HCT116 (cell line): ENCODE measurements at regions of chr21 and their contacts with region 1.

Region 1: DNA sequence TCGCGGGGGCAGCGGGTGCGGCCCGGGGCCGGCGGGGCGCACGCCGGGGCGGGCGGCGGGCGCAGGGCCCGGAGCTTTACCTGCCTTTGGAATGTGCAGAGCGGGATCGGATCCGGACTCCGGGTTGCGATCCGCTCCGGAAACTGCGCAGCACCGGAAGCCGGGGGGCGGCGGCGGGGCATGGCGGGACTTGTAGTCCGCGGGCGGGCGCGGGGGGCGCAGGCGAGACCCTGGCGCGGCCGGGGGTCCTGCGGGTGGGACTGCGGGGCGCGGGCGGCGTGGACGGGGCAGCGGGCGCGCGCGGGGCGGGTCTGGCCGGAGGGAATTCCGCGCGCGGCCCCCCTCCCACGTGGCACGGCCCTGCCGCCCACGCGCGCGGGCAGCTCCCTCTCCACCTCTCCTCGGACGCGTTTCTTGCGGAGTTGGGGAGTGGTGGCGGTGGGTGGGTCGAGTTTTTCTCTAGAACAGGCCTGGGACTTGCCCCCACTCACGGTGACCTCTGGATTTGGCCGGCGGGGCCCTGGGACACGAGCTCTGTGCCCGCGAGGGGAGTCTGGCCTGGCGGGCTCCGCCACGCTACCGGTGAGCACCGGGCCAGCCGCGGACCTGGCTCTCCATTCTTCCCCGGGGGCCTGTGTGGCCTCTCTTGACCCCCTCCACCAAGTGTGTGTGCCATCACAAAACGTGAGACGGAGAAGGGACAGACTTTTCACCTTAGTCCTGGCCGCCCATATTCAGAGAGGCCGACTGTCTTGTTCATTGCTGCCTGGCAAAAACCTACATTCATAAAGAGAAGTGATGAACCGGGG is at the start of gene PRDM15:
- DNase-seq: peak; percentile 60
- ATAC-seq: peak; percentile 80
- H3K4me3 ChIP-seq: peak within 1 kb of the TSS; percentile 77 to 80
- H3K27ac ChIP-seq: peak within 1 kb of the TSS; percentile 94
- H3K4me1 ChIP-seq: peaks cover 8 to 29% of the 10 kb centered on the region in 2 experiments
- H3K27me3 ChIP-seq: no peaks in the 10 kb centered on the region
- CTCF ChIP-seq: no peak
- POLR2A ChIP-seq: no peak
- RAD21 ChIP-seq: no peak
- total RNA-seq, gene PRDM15: 9.8 TPM

Region 2: DNA sequence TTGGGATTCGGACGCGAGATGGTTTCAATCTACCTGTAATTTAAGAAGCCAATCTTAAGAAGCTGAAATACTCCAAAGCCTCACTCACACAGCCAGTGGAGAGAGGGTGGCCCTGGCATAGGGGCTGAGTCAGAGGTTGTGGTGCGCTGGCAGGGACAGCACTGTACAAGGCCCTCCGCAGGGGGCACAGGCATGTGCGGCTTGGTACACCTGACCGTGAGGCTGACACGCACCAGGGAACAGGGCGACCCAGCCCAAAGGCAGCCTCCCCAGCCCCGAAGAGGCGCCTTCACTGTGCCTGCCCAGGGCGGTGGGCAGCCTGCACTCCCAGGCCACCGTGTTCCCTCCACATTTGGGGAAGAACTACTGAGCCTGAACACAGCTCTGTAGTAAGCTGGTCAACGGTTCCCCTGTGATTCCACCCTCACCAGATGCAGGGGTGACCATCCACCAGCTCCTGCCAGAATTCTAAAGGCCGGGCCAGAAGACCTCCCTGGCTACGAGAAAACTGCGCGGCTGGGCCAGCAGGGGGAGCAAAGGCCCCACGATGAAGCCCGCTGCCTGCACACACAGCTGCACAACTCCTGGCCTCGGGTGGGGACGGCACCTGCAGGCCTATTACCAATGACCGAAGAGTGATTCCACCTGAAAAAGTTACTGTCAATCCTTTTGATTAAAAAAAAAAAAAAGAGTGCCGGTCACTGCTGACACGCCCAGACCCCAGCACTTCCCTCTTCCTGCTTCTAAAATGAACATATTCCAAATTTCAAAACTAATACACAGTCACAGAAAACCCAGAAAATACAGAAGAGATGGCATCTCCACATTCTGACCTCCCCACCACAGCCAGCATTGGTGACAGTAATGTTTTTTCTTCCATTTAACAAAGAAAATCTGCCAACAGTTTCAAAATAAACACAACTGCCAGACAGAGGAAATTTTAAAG is 62.9 kb before region 1 on chr21:
- CTCF ChIA-PET with region 1: no interaction called
- POLR2A ChIA-PET with region 1: no interaction called
- RAD21 ChIA-PET with region 1: no interaction called
- intact Hi-C with region 1: loop called (anchors 2 kb)
- DNase-seq: no peak
- ATAC-seq: peak; percentile 87
- H3K4me3 ChIP-seq: no peak overlapping the region
- H3K27ac ChIP-seq: no peak overlapping the region
- H3K4me1 ChIP-seq: no peaks in the 10 kb centered on the region
- H3K27me3 ChIP-seq: no peaks in the 10 kb centered on the region
- CTCF ChIP-seq: peak; percentile 52 to 77 (median 76); a peak in 5 of 6 replicates
- POLR2A ChIP-seq: no peak
- RAD21 ChIP-seq: peak; percentile 74

Region 3: GRCh38 chr21:41953831-41954653 is 74.6 kb after region 1 on chr21 and contains the start of gene C2CD2:
- CTCF ChIA-PET with region 1: no interaction called
- POLR2A ChIA-PET with region 1: interaction called, 4 read pairs
- RAD21 ChIA-PET with region 1: no interaction called
- intact Hi-C with region 1: loop called (anchors 5 kb)
- DNase-seq: no peak
- ATAC-seq: peak; percentile 79
- H3K4me3 ChIP-seq: peak within 1 kb of the TSS; percentile 68 to 83
- H3K27ac ChIP-seq: peak within 1 kb of the TSS; percentile 78; the same call in 1 of the 2 replicates
- H3K4me1 ChIP-seq: peaks cover 36 to 56% of the 10 kb centered on the region in 2 experiments
- H3K27me3 ChIP-seq: no peaks in the 10 kb centered on the region
- CTCF ChIP-seq: no peak
- POLR2A ChIP-seq: peak; percentile 59
- RAD21 ChIP-seq: no peak
- total RNA-seq, gene C2CD2: 22.0 TPM

Region 4: DNA sequence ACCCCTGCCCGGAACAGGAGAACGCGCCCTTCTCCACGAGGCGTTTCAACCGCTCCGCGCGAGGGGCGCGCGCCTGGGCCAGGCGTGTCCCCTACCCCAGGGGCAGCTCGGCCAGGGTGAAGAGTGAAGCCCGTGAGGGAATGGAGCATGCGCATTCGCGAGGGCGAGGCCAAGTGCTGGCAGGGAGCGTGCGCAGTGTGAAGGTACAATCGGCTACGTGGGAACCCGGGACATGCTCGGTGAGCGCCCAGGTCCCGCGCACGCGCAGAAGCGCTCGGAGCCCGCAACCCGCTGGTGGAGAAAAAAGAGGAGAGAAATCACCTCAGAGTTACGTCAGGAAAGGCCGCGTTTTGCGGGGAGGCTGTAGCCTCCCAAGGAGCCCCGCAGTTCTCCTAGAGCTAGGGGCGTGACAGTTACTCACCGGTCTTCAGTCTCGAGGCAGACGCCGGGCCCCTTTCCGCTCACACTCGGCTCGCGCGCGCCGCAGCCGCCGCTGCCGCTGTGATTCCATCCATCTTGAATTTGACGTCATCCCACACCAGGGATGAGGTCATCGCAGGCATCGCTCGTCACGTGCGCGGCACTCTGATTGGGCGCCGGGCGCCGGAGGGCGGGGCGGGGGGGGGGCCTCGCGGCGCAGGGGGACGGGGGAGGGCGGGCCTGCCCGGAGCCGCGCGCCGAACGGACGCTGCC is 130.6 kb after region 1 on chr21 and contains the start of gene ZBTB21:
- CTCF ChIA-PET with region 1: no interaction called
- POLR2A ChIA-PET with region 1: no interaction called
- RAD21 ChIA-PET with region 1: no interaction called
- intact Hi-C with region 1: loop called (anchors 2 kb)
- DNase-seq: peak; percentile 95
- ATAC-seq: peak; percentile 91
- H3K4me3 ChIP-seq: peak within 1 kb of the TSS; percentile 76 to 79
- H3K27ac ChIP-seq: peak within 1 kb of the TSS; percentile 92
- H3K4me1 ChIP-seq: peaks cover 9 to 11% of the 10 kb centered on the region in 2 experiments
- H3K27me3 ChIP-seq: no peaks in the 10 kb centered on the region
- CTCF ChIP-seq: no peak
- POLR2A ChIP-seq: peak; percentile 75
- RAD21 ChIP-seq: no peak
- total RNA-seq, gene ZBTB21: 28.7 TPM

Region 5: DNA sequence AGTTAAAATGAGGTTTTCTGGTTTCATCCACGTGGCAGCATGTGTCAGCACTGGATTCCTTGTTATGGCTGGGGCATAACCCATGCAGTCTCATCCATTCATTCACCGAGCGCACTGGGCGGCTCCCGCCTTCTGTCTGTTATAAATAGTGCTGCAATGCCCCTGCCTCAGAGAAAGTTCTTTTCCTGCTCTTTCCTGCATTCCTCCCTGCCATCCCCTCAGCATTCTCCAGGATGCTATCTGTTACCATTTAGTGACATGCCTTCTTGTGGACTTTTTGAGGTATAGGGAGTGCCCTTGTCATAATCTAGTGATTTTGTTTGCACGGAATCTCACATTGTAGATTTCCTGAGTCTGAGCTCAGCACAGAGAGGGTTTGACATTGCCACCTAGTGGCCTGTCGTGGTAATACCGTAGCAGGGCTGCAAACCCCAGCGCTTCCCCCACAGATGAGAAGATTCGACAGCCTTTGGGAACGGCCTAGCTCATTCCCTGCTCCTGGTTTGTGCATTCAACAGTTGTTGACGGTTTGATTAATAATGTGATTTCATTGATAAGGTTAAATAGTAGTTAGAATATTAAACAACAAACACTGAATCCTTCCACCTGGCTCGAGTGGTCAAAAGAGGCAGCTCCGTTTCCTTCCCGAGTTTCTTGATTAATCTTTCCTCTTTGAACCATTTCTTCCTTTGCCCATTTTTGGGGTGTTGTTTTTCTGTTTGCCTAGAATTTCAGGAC is 238.0 kb after region 1 on chr21:
- CTCF ChIA-PET with region 1: interaction called, 6 read pairs
- POLR2A ChIA-PET with region 1: no interaction called
- RAD21 ChIA-PET with region 1: no interaction called
- intact Hi-C with region 1: loop called (anchors 10 kb)
- DNase-seq: peak; percentile 54
- ATAC-seq: peak; percentile 95
- H3K4me3 ChIP-seq: peak overlapping the region; percentile 26 to 28
- H3K27ac ChIP-seq: no peak overlapping the region
- H3K4me1 ChIP-seq: peaks cover 0 to 5% of the 10 kb centered on the region in 2 experiments; a peak in 1 of 4 replicates
- H3K27me3 ChIP-seq: peaks cover 21% of the 10 kb centered on the region; the same call in 1 of the 2 replicates
- CTCF ChIP-seq: peak; percentile 72 to 91 (median 91); a peak in 5 of 6 replicates
- POLR2A ChIP-seq: no peak
- RAD21 ChIP-seq: peak; percentile 87